ENCODE measurements at regions of chr6 and their contacts with region 1.

Region 1: DNA sequence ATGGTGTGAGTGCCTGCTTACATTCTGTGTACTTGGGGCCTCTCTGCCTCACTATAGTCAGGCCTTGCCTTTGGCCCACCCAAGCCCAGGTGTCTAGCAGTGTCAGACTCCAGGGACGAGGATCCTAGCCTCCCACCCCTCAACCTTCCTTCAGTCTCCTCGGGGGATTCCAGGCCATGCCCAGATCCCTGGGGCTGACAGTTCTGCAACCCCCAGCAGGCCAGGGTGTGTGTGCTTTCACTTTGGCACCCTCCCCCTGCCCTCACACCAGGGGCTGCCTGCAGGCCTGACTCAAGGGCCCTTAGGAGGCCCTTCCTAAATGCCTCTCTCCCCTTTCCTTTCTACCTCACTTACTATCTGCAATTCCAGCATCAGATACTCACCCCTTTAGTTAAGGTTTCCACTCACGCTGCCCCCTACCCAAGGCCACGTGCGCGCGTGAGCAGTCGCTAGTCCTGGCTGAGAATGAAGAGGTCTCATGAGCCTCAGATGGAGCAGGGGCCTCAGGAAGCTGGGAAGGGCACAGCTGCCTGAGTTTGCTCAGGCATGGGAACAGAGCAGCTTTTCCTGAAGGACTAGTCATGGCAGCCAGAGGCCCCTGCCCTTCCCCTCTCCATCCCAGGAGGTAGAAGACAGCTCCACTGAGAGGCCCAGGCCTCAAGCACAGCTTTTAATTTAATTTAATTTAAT is 859 bp upstream of the CLPS start:
- DNase-seq: no peak
- H3K4me3 ChIP-seq: no peak overlapping the region
- H3K27ac ChIP-seq: no peak overlapping the region
- H3K4me1 ChIP-seq: no peaks in the 10 kb centered on the region
- H3K27me3 ChIP-seq: no peaks in the 10 kb centered on the region
- CTCF ChIP-seq: no peak
- POLR2A ChIP-seq: no peak

Region 2: GRCh38 chr6:34232901-34233300 is 1565.1 kb before region 1 on chr6:
- intact Hi-C with region 1: loop called (anchors 5 kb)
- DNase-seq: no peak
- H3K4me3 ChIP-seq: no peak overlapping the region
- H3K27ac ChIP-seq: no peak overlapping the region
- H3K4me1 ChIP-seq: peaks cover 10% of the 10 kb centered on the region
- H3K27me3 ChIP-seq: no peaks in the 10 kb centered on the region
- CTCF ChIP-seq: no peak
- POLR2A ChIP-seq: no peak

Region 3: DNA sequence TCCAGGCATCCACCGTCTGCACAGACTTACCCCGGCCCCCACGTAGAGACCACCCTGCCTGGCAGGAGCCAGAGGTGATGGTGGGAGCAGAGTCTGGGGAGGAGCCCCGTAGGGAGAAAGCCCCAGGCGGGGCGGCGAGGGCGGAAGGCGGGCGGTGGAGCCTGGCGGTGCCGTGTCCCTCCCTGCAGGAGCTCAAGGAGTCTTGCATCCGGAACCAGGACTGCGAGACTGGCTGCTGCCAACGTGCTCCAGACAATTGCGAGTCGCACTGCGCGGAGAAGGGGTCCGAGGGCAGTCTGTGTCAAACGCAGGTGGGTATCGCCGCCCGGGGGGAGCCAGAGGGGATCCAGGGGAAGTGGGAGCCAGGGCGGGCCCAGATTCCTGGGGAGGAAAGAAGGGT is 11.2 kb before region 1 on chr6:
- intact Hi-C with region 1: loop called (anchors 1 kb)
- DNase-seq: no peak
- H3K4me3 ChIP-seq: no peak overlapping the region
- H3K27ac ChIP-seq: no peak overlapping the region
- H3K4me1 ChIP-seq: no peaks in the 10 kb centered on the region
- H3K27me3 ChIP-seq: no peaks in the 10 kb centered on the region
- CTCF ChIP-seq: no peak
- POLR2A ChIP-seq: no peak

Measured in vagina (tissue), 2 donors.